ENCODE measurements at regions of chr3 and their contacts with region 1.

Region 1: GRCh38 chr3:97901313-97902248 is 70.7 kb downstream of the RIOX2 start:
- H3K4me3 Mint-ChIP-seq: no peak overlapping the region
- H3K27ac Mint-ChIP-seq: peak overlapping the region; percentile 47
- H3K4me1 Mint-ChIP-seq: peaks cover 19% of the 10 kb centered on the region
- H3K27me3 Mint-ChIP-seq: no peaks in the 10 kb centered on the region

Region 2: DNA sequence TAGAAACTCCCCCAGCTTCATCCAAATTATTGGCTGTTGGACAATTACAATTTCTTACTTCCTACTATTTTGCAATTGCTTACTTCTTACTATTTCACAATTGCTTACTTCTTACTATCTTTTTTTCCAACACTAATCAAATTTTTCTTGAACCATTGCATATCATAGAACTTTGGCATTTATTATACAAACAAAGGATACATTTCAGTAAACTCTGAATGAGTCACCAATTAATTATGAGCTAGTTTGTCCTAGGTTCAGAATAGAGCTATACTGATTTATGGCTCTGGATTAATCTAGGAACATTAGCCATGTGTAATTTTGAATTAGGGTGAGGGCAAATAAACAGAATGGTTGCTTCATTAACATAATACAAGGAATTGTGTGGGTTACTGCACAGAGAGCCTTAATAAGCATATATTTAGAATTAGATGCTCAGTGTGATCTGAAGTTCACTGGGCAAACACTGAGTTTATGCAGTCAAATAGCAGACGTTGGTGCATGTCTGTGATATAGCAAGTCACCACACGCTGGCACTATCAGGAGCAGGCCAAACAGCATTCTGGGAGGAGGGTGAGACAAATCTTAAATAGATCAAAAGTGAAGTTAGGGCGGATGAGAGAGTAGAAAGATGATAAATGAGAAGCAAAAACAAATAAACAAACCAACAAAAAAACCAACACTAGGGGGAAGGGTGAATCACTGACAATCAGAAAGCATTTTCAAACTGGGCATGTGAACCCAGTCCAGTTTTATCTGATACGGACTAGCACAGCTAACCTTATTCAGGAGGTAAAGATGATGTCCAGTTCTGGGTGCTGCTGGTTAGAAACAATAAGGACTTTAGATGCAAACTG is 112.1 kb after region 1 on chr3:
- intact Hi-C with region 1: loop called (anchors 5 kb)
- H3K4me3 Mint-ChIP-seq: peak overlapping the region; percentile 2
- H3K27ac Mint-ChIP-seq: peak overlapping the region; percentile 78
- H3K4me1 Mint-ChIP-seq: peaks cover 26% of the 10 kb centered on the region
- H3K27me3 Mint-ChIP-seq: no peaks in the 10 kb centered on the region

Measured in dendritic cell treated with granulocyte-macrophage colony-stimulating factor and Interleukin-4, amounts not matched to agents 40 ng/mL and 50 ng/mL, for 4 days (primary cell).